Motor neuron (in vitro differentiated cells): ENCODE measurements at regions of chr2 and their contacts with region 1.

Region 1: DNA sequence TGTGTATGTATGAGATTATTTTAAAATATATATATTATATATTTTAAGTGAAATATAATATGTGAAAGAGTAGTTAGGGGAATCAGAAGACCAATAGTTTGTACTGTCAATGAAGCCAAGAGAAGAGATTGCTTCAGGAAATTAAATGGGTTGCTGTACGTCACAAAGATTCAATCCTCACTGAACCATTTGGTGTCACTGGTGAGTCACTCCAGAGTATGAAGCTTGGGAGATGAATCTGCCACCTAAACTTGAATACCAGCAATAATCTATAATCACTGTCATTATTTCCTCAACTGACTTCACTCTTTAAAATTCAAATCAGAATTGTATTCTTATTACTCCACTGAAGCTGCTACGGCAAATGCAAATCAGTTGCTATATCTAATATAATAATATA is 41.9 kb upstream of the SCN9A start:
- ATAC-seq: peak in 4 of 8 experiments; percentile 35 to 83 (median 60)
- H3K4me3 ChIP-seq: no peak overlapping the region
- H3K27ac ChIP-seq: no peak overlapping the region
- H3K4me1 ChIP-seq: no peaks in the 10 kb centered on the region

Region 2: DNA sequence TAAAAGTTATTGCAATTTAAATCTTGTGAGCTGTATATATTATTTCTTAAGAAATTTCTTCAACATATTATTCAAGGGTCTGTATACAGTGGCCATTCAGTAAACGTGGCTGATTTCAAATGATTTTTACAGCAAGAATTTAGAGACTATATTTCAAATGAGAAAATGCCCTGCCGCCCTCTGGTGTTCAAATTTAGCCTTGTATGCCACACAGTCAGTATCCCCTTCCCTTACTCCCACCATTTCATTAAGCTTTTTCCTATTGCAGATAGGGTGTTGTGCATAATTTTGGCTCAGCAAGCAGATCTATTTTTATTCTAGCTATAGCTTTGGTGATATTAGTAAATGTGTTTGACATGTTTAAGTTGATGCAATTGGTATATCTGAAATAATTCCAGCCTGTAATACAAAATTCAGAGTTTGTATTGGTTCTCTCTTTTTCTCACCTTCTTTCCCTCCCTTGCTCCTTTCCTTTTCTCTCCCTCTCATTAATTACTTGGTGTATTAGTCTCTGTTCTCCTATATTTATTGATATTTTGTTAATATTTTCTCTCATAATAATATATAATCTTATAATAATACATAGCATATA is 99.1 kb after region 1 on chr2:
- in situ Hi-C with region 1: loop called in 3 of 9 experiments (anchors 10 to 25 kb)
- ATAC-seq: peak in 7 of 8 experiments; percentile 40 to 70 (median 51)
- H3K4me3 ChIP-seq: no peak overlapping the region
- H3K27ac ChIP-seq: no peak overlapping the region
- H3K4me1 ChIP-seq: no peaks in the 10 kb centered on the region